Heart right ventricle (tissue), 16 donors: ENCODE measurements at regions of chr2 and their contacts with region 1.

Region 1: GRCh38 chr2:172806493-172806892 is 70.8 kb downstream of the RAPGEF4 start:
- DNase-seq: peak in 1 of 2 donors; percentile 25
- ATAC-seq: peak in 4 of 8 donors; percentile 41 to 66 (median 50)
- H3K4me3 ChIP-seq: no peak overlapping the region
- H3K27ac ChIP-seq: no peak overlapping the region
- H3K4me1 ChIP-seq: peaks cover 0 to 6% (median 0%) of the 10 kb centered on the region in 9 donors
- H3K27me3 ChIP-seq: peaks cover 0 to 4% (median 0%) of the 10 kb centered on the region in 7 donors
- CTCF ChIP-seq: peak; percentile 68 to 94 (median 90)

Region 2: DNA sequence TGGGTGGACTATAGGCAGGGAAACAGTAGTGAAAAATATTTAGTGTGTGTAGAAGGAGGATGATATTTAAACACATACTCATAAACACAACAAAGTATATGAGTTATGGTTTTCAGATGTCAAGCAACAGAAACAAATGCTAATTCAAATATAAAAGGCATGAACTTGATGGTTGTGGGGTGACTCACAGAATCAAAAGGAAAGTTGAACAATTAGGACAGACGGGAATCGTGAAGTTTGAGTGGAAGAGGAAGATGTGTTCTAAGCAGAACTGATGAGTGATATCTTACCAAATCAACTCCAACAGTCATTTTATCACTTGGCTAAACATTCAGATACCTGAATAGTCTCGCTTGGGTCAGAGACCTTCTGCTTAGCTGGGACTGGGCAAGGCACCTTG is 432.7 kb before region 1 on chr2:
- intact Hi-C with region 1: no loop called
- DNase-seq: no peak
- ATAC-seq: no peak
- H3K4me3 ChIP-seq: no peak overlapping the region
- H3K27ac ChIP-seq: no peak overlapping the region
- H3K4me1 ChIP-seq: peaks cover 7 to 40% (median 20%) of the 10 kb centered on the region in 9 donors
- H3K27me3 ChIP-seq: no peaks in the 10 kb centered on the region
- CTCF ChIP-seq: no peak

Region 3: DNA sequence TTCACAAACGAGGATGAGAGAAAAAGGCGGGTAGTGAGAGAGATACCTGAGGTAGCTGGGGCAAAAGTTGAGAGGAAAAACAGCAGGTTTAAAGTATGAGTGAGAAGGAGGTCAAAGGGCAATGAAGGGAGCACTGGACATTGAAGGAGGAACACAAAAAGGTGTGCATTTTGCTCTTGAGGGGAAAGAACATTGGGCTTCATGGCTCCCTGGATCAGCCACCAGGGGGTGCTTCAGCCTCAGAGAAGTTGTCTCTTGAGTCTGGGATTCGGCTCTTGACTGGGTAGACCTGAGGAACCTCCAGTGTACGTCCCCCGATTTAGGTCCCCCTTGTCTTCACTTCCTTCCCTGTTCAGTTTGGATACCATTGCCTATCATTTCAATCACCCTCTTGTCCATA is 57.7 kb after region 1 on chr2:
- intact Hi-C with region 1: loop called in 4 of 10 experiments (anchors 5 kb)
- DNase-seq: peak; percentile 42 to 59
- ATAC-seq: peak in 5 of 8 donors; percentile 47 to 69 (median 53)
- H3K4me3 ChIP-seq: no peak overlapping the region
- H3K27ac ChIP-seq: no peak overlapping the region
- H3K4me1 ChIP-seq: peaks cover 6 to 54% (median 43%) of the 10 kb centered on the region in 9 donors
- H3K27me3 ChIP-seq: no peaks in the 10 kb centered on the region
- CTCF ChIP-seq: peak; percentile 19 to 74 (median 67)

Region 4: DNA sequence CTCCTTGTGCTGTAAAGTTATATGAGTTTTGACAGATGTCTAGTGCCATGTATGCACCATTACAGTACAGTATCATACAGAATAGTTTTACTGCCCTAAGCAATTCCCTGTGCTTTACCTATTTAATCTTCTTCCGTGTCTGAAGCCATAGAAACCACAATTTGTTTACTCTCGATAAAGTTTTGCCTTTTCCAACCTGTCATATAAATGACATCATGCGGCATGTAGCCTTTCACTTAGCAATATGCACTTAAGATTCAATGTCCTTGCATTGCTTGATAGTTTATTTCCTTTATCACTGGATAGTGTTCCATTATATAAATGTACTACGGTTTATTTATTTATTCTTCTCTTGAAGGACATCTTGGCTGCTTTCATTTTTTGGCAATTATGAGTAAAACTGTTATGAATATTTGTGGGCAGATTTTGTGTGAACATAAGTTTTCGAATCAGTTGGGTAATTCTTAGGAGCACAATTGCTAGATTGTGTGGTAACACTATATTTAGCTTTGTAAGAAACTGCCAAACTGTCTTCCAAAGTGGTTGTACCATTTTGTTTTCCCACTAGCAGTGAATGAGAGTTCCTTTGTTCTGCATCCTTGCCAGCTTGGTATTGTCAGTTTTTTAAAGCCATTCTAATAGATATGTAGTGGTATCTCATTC is 132.4 kb after region 1 on chr2:
- intact Hi-C with region 1: loop called in 3 of 10 experiments (anchors 5 kb)
- DNase-seq: no peak
- ATAC-seq: no peak
- H3K4me3 ChIP-seq: no peak overlapping the region
- H3K27ac ChIP-seq: no peak overlapping the region
- H3K4me1 ChIP-seq: no peaks in the 10 kb centered on the region
- H3K27me3 ChIP-seq: no peaks in the 10 kb centered on the region
- CTCF ChIP-seq: no peak

Region 5: DNA sequence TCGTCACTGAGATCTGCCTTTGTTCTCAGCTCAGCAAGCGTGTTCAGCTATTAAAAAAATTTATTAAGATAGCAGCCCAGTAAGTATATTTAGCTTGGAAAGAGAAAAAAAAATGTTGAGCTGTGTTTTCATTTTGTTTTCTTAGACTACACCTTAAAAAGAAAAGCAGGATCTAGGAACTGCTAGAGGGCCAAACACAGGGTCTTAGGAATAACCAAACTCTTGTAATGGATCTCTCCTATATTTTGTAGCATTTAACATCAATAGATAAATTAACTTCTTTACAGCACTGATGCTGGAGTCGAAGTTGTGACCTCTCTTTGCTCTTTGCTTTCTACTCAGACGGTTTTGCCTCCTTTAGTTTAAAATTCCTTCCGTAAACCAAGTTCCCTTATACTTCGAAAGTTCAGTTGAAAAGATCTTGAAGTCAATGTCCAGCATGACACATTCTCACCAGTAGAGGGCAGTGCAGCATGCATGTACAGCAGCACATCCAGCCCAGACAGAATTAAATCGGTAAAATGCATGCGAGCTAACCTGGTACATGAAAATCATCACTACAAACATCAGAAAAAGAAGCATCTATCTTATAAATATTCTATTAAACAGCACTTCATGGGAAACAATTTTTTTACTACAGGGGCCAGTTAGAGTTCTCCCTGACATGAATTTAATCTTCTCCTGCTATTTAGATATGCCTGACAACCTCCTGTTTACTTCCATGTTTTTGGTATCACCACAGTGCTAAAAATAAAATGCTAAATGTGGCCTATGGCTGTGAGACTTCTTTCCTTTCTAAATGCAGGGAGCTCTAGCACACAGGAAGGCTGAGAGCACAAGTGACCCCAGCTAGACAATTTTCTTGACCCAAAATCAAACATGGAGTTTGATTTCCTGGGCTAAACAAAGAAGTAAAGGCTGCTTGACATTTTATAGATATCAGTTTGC is 221.0 kb after region 1 on chr2:
- intact Hi-C with region 1: loop called in 2 of 10 experiments (anchors 5 to 10 kb)
- DNase-seq: peak; percentile 35 to 92
- ATAC-seq: peak; percentile 77 to 93 (median 84)
- H3K4me3 ChIP-seq: no peak overlapping the region
- H3K27ac ChIP-seq: peak overlapping the region; percentile 46 to 88 (median 80)
- H3K4me1 ChIP-seq: peaks cover 5 to 49% (median 22%) of the 10 kb centered on the region in 9 donors
- H3K27me3 ChIP-seq: no peaks in the 10 kb centered on the region
- CTCF ChIP-seq: peak; percentile 92 to 98 (median 96)

Region 6: DNA sequence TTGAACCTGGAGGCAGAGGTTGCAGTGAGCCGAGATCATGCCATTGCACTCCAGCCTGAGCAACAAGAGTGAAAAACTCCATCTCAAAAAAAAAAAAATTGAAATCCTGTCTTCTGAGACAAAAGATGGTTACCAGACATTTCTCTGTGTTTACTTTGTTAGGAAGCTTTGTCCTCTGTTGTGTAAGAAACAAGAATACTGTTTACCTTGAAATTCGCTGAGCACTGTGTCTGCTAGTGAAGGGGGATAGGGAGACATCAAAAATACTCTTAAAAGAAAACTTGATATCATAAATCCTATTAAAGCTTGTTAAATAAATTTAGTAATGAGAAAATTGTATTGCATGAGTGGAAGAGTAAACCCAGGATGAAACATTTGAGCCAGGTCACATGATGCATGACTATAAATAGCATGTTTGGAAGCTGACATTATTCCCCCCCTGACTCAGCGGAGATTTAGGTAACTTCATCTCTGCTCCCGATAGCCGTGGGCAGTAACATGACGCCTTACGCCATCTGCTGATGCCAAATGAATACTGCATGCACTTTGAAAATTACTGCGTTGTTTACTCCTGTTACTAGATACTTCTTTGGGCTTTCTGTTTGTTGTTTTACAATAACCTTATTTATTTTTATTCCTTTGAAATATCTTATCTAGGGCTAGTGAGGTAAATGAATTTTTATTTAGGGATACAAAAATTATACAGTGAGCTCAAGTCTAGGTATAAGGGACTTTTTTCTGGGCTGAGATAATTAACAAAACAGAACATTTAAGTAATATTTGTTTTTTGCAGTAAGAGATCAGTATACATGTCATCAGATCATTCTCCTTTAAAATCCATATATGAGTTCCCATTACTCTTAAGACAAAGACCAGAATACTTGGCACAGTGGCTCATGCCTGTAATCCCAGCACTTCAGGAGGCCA is 404.0 kb after region 1 on chr2:
- intact Hi-C with region 1: loop called in 6 of 10 experiments (anchors 2 to 10 kb)
- DNase-seq: peak; percentile 20 to 87
- ATAC-seq: peak; percentile 87 to 94 (median 92)
- H3K4me3 ChIP-seq: no peak overlapping the region
- H3K27ac ChIP-seq: peak overlapping the region; percentile 8 to 83 (median 59)
- H3K4me1 ChIP-seq: peaks cover 9 to 60% (median 35%) of the 10 kb centered on the region in 9 donors
- H3K27me3 ChIP-seq: no peaks in the 10 kb centered on the region
- CTCF ChIP-seq: peak; percentile 69 to 97 (median 89)